ENCODE measurements at regions of chr19 and their contacts with region 1.

Region 1: GRCh38 chr19:46265217-46265828 is 31.5 kb upstream of the HIF3A start:
- DNase-seq: peak; percentile 75
- CTCF ChIP-seq: peak; percentile 65

Region 2: DNA sequence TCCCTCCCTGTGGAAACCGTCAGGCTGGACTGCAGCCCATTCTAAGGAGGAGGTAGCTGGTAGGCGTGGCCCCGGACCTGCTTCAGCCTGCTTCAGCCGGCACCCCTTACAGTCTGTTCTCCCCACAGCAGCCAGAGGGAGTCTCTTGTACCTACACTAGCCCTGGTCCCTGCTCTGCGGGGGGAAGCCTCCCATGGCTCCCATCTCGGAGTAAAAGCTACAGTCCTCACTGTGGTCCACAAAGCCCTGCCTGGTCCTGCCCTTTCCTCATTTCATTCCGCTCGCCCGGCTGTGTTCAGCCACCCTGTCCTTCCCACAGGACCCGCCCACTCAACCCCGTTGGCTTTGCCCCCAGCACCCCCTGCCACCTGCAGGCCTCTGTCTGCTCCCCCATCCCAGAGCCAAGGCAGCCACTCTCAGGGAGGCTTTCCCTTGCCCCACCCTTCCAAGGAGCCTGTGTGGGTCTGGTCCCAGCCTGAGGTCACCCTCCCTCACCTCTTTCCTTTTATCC is 243.7 kb before region 1 on chr19:
- in situ Hi-C with region 1: loop called (anchors 10 kb)
- DNase-seq: no peak
- CTCF ChIP-seq: no peak

Region 3: GRCh38 chr19:46081928-46082727 is 183.2 kb before region 1 on chr19:
- in situ Hi-C with region 1: loop called (anchors 10 kb)
- DNase-seq: peak; percentile 62
- CTCF ChIP-seq: peak; percentile 30

Measured in GM13976 (cell line).